Heart right ventricle (tissue), 16 donors: ENCODE measurements at regions of chr10 and their contacts with region 1.

Region 1: GRCh38 chr10:35650894-35651293 is 8.8 kb upstream of the FZD8 start:
- DNase-seq: no peak
- ATAC-seq: no peak
- H3K4me3 ChIP-seq: no peak overlapping the region
- H3K27ac ChIP-seq: no peak overlapping the region
- H3K4me1 ChIP-seq: no peaks in the 10 kb centered on the region
- H3K27me3 ChIP-seq: no peaks in the 10 kb centered on the region
- CTCF ChIP-seq: no peak

Region 2: GRCh38 chr10:36504758-36505157 is 853.9 kb after region 1 on chr10:
- intact Hi-C with region 1: loop called in 2 of 10 experiments (anchors 10 kb)
- DNase-seq: no peak
- ATAC-seq: peak in 5 of 8 donors; percentile 15 to 64 (median 41)
- H3K4me3 ChIP-seq: no peak overlapping the region
- H3K27ac ChIP-seq: no peak overlapping the region
- H3K4me1 ChIP-seq: no peaks in the 10 kb centered on the region
- H3K27me3 ChIP-seq: no peaks in the 10 kb centered on the region
- CTCF ChIP-seq: peak in 6 of 9 donors; percentile 20 to 50 (median 34)